Cardiac septum (tissue), 1 donor: ENCODE measurements at regions of chr14 and their contacts with region 1.

Region 1: GRCh38 chr14:96053600-96054381 is 14.6 kb downstream of the C14orf132 start:
- DNase-seq: peak; percentile 82

Region 2: GRCh38 chr14:95993768-95994592 is 59.8 kb before region 1 on chr14:
- intact Hi-C with region 1: no loop called
- DNase-seq: no peak

Region 3: GRCh38 chr14:96038920-96039632 is 14.7 kb before region 1 on chr14 and contains the start of gene C14orf132:
- intact Hi-C with region 1: loop called (anchors 2 kb)
- DNase-seq: peak; percentile 86
- total RNA-seq, gene C14orf132: 18.9 TPM

Region 4: GRCh38 chr14:96100161-96101029 is 46.6 kb after region 1 on chr14:
- intact Hi-C with region 1: no loop called
- DNase-seq: no peak